ENCODE measurements at regions of chr6 and their contacts with region 1.

Region 1: DNA sequence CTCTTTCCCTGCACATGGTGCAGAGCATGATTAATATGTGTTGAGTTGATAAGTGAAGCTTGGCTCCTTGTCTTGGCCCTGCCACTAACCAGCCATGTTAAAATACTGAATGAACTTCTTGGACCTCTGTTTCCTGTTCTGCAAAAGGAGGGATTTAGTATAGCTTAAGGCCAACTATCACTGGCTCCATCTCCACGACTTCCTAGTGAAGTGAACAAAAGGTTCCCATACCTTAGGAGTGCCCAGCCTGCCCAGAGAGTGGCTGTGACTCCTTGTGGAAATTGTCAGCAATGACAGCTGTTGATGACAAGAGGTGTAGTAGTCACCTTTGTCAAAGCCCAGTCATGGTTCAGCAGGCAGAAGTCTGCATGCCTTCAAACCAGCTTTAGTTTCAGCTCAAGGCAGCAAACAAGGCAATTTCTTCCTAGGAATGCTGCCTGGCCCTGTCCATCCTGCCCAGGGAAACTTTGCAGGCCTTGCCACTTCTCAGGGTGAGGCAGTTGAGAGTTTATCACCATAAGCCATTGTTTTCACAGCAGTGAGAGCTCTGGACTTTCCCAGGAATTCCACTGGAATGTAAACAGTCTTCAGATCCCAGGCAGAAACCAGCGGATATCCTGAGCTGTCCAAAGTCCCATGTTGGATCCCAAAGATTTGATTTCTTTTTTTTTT is 169.7 kb upstream of the TNFAIP3 start:
- DNase-seq: no peak
- H3K4me3 Mint-ChIP-seq: no peak overlapping the region
- H3K27ac Mint-ChIP-seq: peak overlapping the region; percentile 52
- H3K4me1 Mint-ChIP-seq: peaks cover 53% of the 10 kb centered on the region
- H3K27me3 Mint-ChIP-seq: no peaks in the 10 kb centered on the region

Region 2: DNA sequence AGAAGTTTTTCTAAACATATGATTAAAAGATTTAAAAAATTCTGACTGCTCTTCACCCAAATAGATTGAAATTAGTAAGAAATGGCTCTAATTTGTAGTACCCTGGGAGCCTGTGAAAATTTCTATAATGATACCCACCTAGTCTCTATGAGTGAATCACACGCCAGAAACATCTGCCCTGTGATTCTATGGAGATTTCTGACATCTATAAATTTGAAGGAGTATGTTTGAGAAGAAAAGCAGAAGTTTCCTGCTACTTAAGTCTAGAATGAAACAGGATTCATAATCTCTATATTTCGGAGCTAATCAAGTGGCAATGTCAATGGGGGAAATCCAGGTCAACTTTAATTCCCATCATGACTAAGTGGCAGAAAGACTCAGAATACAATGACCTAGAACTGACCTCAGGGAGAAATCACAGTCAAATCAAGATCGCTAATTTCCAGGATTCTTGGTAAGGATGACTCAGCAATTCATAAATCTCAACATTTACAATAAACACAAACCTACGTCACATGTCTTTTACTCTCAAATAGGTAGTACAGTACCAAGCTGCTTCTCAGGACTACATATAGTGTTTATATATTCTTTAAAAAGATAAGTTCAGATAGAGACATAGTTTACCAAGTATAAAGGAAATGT is 16.6 kb before region 1 on chr6:
- CTCF ChIA-PET with region 1: interaction called, 10 read pairs
- POLR2A ChIA-PET with region 1: interaction called, 11 read pairs
- DNase-seq: no peak
- H3K4me3 Mint-ChIP-seq: peak overlapping the region; percentile 12
- H3K27ac Mint-ChIP-seq: peak overlapping the region; percentile 54
- H3K4me1 Mint-ChIP-seq: peaks cover 76% of the 10 kb centered on the region
- H3K27me3 Mint-ChIP-seq: no peaks in the 10 kb centered on the region

Measured in activated CD4-positive, alpha-beta memory T cell treated with anti-CD3 and anti-CD28 coated beads, Interleukin-2, amount 10 ng/mL, durations not matched to agents 7 days and 5 days (primary cell).